ENCODE measurements at regions of chr6 and their contacts with region 1.

Region 1: GRCh38 chr6:38493931-38494547 is 145.7 kb downstream of the BTBD9 start:
- DNase-seq: peak; percentile 62 to 96 (median 78)
- H3K4me3 ChIP-seq: peak overlapping the region in 14 of 59 donors; percentile 3 to 44 (median 13)
- H3K27ac ChIP-seq: peak overlapping the region in 42 of 59 donors; percentile 3 to 84 (median 64)
- H3K27me3 ChIP-seq: no peaks in the 10 kb centered on the region
- CTCF ChIP-seq: peak; percentile 89 to 100 (median 97)

Region 2: GRCh38 chr6:37483917-37484785 is 1009.9 kb before region 1 on chr6:
- intact Hi-C with region 1: loop called in 1 of 2 experiments (anchors 10 kb)
- DNase-seq: peak; percentile 57 to 83 (median 66)
- H3K4me3 ChIP-seq: no peak overlapping the region
- H3K27ac ChIP-seq: peak overlapping the region in 3 of 59 donors; percentile 2 to 34 (median 3)
- H3K27me3 ChIP-seq: no peaks in the 10 kb centered on the region
- CTCF ChIP-seq: peak; percentile 26 to 89 (median 77)

Region 3: GRCh38 chr6:37705239-37706051 is 788.6 kb before region 1 on chr6:
- intact Hi-C with region 1: loop called in 1 of 2 experiments (anchors 5 kb)
- DNase-seq: peak; percentile 71 to 88 (median 82)
- H3K4me3 ChIP-seq: peak overlapping the region; percentile 30 to 75 (median 57)
- H3K27ac ChIP-seq: peak overlapping the region; percentile 25 to 93 (median 83)
- H3K27me3 ChIP-seq: no peaks in the 10 kb centered on the region
- CTCF ChIP-seq: peak; percentile 50 to 91 (median 76)

Region 4: GRCh38 chr6:38034274-38034914 is 459.6 kb before region 1 on chr6:
- intact Hi-C with region 1: loop called in 1 of 2 experiments (anchors 10 kb)
- DNase-seq: peak in 1 of 10 donors; percentile 27
- H3K4me3 ChIP-seq: no peak overlapping the region
- H3K27ac ChIP-seq: no peak overlapping the region
- H3K27me3 ChIP-seq: no peaks in the 10 kb centered on the region
- CTCF ChIP-seq: peak; percentile 32 to 76 (median 64)

Region 5: DNA sequence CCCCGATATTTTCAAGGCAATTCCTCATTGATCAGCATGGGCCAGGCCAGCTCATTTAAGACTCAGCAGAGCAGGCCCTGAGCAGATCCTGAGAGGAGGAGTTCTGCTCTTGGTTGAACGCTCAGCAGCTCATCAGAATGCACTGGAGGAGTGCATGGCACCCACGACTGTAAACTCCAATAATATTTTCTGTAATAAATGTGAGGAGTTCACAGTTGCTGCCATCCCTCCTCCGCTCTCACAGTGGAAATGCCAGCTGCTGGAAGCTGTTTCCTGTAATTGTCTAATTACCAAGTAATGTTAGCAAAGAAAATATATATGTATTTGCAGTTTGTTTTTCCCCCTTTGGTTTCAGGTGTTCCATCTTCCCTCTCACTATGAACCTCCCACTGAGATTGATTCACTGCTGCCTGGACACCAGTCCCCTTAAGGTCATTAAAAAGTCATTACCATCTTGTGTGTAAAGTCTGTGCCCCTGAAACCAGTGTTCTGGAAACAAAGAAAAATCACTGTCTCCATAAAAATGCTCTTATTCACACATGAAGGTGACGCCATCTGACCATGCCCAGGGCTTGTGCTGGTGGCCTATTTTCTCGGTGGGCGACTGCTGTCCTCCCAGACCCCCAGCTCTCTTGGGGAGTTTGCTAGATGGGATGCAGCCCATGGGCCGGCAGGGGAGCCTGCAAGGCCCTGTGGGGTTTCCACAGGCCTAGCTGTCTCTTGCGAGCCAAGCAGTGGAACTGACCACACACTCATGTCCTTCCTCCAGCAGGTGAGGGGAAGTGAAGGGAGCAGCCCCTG is 300.4 kb before region 1 on chr6:
- intact Hi-C with region 1: no loop called
- DNase-seq: peak in 1 of 10 donors; percentile 8
- H3K4me3 ChIP-seq: no peak overlapping the region
- H3K27ac ChIP-seq: no peak overlapping the region
- H3K27me3 ChIP-seq: no peaks in the 10 kb centered on the region
- CTCF ChIP-seq: no peak

Region 6: DNA sequence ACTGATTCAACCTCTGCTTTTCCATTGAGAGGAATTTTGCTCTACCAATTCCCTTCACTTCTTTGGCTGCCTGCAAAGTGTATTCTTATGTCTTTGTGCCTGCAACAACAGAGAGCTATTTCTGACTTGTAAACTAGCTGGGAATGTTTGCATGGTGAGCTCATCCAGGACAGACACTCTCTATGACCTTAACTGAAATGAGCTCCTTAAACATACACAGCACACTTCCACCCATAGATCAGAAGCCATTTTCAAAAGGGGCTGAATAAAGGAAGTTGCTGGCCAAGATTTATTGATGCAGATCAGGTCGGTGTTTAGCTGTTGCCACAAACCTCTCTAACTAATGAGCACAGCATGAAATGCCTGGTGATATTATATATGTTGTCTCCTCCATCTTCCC is 232.0 kb before region 1 on chr6:
- intact Hi-C with region 1: loop called in 1 of 2 experiments (anchors 10 kb)
- DNase-seq: no peak
- H3K4me3 ChIP-seq: peak overlapping the region in 2 of 59 donors; percentile 5 to 27
- H3K27ac ChIP-seq: peak overlapping the region; percentile 43 to 95 (median 84)
- H3K27me3 ChIP-seq: no peaks in the 10 kb centered on the region
- CTCF ChIP-seq: no peak

Region 7: GRCh38 chr6:38279420-38279819 is 214.6 kb before region 1 on chr6:
- intact Hi-C with region 1: no loop called
- DNase-seq: peak in 6 of 10 donors; percentile 30 to 66 (median 54)
- H3K4me3 ChIP-seq: no peak overlapping the region
- H3K27ac ChIP-seq: peak overlapping the region in 29 of 59 donors; percentile 0 to 82 (median 71)
- H3K27me3 ChIP-seq: no peaks in the 10 kb centered on the region
- CTCF ChIP-seq: peak in 52 of 56 donors; percentile 13 to 78 (median 51)

Region 8: GRCh38 chr6:38570750-38571149 is 76.7 kb after region 1 on chr6:
- intact Hi-C with region 1: loop called in 1 of 2 experiments (anchors 5 kb)
- DNase-seq: no peak
- H3K4me3 ChIP-seq: no peak overlapping the region
- H3K27ac ChIP-seq: no peak overlapping the region
- H3K27me3 ChIP-seq: no peaks in the 10 kb centered on the region
- CTCF ChIP-seq: peak; percentile 16 to 79 (median 62)

Region 9: DNA sequence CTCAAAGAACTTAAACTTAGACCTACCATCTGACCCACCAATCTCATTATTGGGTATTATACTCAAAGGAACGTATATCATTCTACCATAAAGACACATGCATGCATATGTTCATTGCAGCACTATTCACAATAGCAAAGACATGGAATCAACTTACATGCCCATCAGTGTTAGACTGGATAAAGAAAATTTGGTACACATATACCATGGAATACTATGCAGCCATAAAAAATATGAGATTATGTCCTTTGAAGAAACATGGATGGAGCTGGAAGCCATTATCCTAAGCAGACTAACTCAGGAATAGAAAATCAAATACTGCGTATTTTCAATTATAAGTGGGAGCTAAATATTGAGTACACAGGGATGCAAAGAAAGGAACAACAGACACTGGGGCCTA is 388.1 kb after region 1 on chr6:
- intact Hi-C with region 1: no loop called
- DNase-seq: no peak
- H3K4me3 ChIP-seq: no peak overlapping the region
- H3K27ac ChIP-seq: no peak overlapping the region
- H3K27me3 ChIP-seq: peaks cover 0 to 3% (median 0%) of the 10 kb centered on the region in 45 donors
- CTCF ChIP-seq: no peak